ENCODE measurements at regions of chr1 and their contacts with region 1.

Region 1: DNA sequence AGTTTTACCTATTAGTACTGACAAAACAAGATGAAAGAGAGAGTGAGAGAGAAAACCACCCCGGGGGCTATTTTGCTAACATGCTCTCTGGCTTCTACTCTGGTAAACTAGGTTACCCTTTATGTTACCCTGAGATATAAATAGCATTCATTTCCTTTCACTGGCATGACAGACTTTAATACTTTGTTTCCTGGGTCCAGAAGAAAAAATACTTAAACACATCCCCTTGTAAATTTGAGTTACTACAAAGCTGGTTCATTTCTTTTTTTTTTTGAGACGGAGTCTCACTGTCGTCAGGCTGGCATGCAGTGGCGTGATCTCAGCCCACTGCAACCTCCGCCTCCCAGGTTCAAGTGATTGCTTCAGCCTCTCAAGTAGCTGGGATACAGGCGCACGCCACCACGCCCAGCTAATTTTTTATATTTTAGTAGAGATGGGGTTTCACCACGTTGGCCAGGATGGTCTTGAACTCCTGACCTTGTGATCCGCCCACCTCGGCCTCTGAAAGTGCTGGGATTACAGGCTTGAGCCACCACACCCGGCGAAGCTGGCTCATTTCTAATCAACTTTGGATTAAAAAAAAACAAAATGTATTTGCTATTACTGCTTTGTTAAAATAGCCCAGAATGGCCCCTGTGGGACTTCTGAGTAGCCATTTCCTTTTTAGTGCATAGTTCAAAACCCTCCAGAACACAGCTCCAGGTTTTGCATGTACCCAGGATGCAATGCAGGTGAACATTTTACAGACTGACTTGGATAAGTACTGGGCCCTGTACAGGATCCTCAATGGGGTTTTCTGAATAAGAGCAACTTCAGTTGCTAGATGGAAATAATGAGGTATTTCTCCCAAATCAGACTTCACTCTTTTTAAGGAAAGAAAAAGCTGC is 20.6 kb downstream of the INPP5B start:
- DNase-seq: peak; percentile 39
- CTCF ChIP-seq: no peak

Region 2: DNA sequence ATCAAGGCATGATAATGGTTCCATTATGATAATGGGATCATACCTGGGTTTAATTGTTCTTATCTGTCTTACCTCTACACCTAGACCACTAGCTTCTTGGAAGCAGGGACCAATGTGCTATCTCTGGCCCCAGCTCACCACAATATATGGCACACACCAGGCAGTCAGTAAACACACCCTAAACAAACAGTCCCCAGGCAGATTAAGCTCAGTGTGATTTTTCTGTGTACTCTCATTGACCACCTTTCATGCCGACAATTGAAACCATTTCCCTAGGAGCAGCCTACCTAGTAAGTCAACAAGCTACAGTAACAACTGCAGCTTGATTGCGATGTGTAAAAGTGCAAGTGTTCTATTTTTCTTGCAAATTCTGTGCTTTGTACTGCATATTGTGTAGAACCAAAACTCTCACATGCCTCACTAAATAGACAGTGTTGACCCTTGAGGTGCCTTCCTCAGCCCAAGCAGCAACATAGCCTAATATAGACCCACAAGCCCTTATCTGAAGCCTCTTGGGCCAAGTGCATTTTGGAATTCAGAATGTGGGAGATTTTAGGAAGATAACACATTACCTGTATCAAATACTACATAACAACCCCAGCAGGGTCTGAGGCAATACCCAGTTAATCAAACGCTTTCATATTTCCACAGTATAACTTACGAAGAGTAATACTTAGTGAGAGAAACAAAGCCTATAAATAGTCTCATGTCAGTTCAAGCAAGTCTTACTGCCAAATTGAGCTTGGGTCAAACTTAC is 11.4 kb before region 1 on chr1:
- CTCF ChIA-PET with region 1: interaction called, 11 read pairs
- POLR2A ChIA-PET with region 1: no interaction called
- DNase-seq: no peak
- CTCF ChIP-seq: no peak

Measured in GM10248 (cell line).